MCF 10A (cell line): ENCODE measurements at regions of chr20 and their contacts with region 1.

Region 1: DNA sequence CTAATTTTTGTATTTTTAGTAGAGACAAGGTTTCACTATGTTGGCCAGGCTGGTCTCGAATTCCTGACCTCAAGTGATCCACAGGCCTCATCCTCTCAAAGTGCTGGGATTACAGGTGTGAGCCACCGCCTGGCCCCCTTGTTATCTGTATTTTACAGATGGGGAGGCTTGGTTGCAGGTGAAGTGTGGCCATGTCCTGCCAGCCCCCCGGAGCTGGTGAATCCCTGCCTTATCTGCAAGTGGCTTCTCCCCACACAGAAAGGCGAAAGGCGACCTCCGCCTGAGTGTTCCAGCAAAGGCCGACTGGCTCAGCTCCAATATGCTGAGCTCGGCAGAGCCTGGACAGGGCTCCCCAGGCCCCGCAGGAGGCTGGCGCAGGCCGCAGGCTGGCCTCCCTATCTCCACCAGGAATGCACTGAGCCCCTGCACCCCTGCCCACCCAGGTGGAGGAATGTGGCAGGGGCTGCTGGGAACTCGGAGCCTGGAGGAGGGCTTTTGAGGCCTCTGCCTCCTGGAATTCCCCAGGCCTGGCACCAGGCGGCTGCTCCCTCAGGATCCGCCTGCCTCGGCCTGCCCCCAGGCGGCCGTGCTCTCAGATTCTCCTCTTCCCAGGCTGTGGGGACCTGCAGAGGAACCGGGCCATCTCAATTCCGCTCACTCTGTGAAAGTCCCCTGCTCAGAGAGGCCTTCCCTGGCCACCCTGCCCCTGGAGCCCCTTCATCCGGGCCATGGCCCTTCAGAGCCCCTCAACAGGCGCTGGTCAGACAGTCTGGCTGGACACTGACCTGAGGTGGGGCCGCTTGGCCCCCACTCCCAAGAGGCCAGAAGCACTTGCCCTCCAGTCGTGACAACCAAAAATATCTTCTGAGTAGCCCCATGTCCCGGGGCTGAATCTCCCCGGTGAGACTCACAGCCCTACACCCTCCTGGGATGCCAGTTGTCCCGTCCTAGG is 9.3 kb upstream of the LAMA5 start:
- DNase-seq: peak; percentile 52
- H3K4me3 Mint-ChIP-seq: no peak overlapping the region
- H3K27ac Mint-ChIP-seq: no peak overlapping the region
- H3K4me1 Mint-ChIP-seq: peaks cover 11% of the 10 kb centered on the region
- H3K27me3 Mint-ChIP-seq: no peaks in the 10 kb centered on the region
- CTCF ChIP-seq: no peak

Region 2: DNA sequence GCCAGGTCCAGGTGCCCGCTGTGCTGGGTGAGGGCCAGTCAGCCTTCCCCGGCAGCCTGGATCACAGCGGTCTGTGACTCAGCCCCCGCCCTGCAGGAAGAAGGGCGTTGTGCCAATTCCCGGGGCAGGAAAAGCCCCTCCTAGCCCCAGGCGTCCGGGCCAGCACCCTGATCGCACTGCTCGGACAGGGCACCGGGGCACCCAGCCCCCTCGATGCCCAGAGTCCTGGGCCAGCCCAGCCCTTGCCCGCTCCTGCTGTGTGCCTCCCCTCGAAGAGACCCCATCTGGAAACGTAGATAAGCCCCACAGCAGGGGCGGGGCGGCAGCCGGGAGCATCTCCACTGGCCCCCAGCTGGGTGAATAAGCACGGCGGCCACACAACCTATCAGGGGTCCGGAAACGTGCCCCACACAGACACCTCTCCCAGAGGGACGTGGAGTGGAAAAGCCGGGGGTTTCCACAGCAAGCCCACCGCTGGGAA is 19.2 kb before region 1 on chr20:
- CTCF ChIA-PET with region 1: interaction called, 87 read pairs
- POLR2A ChIA-PET with region 1: interaction called, 347 read pairs
- intact Hi-C with region 1: loop called (anchors 1 kb)
- DNase-seq: peak; percentile 73
- H3K4me3 Mint-ChIP-seq: no peak overlapping the region
- H3K27ac Mint-ChIP-seq: no peak overlapping the region
- H3K4me1 Mint-ChIP-seq: peaks cover 34% of the 10 kb centered on the region
- H3K27me3 Mint-ChIP-seq: no peaks in the 10 kb centered on the region
- CTCF ChIP-seq: no peak

Region 3: GRCh38 chr20:62500237-62500864 is 124.0 kb after region 1 on chr20:
- CTCF ChIA-PET with region 1: no interaction called
- POLR2A ChIA-PET with region 1: no interaction called
- intact Hi-C with region 1: no loop called
- DNase-seq: peak; percentile 63
- H3K4me3 Mint-ChIP-seq: no peak overlapping the region
- H3K27ac Mint-ChIP-seq: no peak overlapping the region
- H3K4me1 Mint-ChIP-seq: peaks cover 19% of the 10 kb centered on the region
- H3K27me3 Mint-ChIP-seq: no peaks in the 10 kb centered on the region
- CTCF ChIP-seq: peak; percentile 83